Posterior vena cava (tissue), 2 donors: ENCODE measurements at regions of chr17 and their contacts with region 1.

Region 1: DNA sequence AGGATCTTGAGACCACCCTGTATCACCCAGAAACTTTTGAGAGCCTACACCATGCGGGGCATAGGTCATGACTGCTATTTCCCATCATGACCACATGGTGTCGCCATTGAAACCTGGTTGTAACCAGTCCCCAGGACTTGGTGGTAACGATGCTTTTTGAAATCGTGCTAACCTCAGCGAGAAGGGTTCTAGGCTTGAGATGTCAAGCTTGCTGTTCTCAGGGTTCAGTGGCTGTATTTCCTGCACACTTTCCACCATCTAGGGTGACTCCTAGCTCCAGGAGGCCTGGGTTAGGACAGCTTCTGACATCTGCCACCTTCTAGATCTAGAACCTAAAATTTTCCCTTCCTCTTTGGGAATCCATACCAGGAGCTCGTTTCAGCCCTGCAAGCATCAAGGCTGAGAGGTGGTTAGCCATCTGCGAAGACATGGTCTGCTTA is 13.0 kb upstream of the SPNS3 start:
- DNase-seq: no peak

Region 2: DNA sequence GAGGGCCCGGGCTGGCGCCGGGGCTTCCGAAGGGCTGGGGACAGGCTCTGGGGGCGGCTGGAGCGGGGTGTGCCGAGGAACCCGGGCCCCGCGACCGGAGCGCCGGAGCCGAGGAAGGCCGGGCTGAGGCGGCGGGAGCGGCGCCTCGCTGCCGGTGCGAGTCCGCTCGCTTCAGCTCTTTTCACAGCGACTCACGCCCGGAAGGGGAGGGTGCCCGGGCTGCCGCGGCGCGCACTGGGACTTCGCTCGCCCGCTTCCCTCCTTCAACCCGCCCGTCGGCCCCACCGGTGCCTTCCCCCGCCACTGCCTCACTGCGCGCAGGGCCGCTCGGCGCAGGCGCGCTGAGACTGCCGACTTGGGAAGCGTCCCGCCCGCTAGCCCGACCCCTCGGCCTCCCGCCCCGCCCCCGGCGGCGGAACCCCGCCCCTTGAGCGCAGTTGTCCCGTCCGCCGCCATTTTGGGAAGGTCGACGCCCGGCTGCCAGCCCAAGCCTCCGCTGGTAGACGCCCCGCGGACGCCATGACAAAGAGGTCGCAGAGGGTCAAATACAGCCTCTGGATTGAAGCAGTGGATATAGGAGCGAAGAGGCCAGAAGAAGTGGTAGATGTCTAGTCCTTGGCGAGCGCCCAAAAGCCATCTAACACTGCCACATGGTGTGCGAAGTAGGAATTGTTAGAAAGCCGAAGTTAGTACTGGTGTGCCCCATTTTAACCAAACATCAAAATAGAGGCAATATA is 54.2 kb before region 1 on chr17 and contains the start of gene UBE2G1:
- intact Hi-C with region 1: no loop called
- DNase-seq: peak; percentile 99
- total RNA-seq, gene UBE2G1: 53.4 to 57.0 TPM

Region 3: DNA sequence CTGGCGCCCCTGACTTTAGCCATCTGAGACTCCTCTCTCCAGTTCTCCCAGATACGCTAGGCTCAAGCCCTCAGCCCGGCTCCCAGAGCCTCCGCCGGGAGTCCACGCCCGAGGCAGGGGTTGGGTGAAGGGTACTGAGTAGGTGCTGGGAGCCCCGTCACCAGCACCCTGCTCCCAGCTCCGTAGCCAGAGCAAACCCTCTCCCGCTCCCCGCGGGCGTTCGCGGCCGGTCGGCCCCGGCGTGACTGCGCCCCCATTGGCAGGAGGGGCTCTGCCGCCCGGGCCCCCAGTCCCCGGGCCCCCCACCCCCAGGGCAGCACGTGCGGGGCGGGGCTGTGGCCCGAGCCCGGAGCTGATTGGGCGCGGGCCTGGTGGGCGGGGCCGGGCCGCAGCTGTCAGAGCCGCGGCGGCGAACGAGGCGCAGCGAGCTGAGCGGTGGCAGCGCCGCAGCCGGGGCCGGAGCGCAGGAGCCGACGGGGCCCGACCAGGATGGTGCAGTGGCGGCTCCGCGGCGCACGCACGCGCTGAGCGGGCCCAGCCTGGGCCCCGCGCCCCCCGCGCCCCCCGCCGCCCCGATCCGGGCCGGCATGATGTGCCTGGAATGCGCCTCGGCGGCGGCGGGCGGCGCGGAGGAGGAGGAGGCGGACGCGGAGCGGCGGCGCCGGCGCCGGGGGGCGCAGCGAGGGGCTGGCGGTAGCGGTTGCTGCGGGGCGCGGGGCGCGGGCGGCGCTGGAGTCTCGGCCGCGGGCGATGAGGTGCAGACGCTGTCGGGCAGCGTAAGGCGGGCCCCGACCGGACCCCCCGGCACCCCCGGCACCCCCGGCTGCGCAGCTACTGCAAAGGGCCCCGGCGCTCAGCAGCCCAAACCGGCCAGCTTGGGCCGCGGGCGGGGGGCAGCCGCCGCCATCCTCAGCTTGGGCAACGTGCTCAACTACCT is 78.0 kb after region 1 on chr17 and contains the start of gene SPNS2:
- intact Hi-C with region 1: loop called in 1 of 2 experiments (anchors 10 kb)
- DNase-seq: peak; percentile 89
- total RNA-seq, gene SPNS2: 16.2 to 20.9 TPM

Region 4: DNA sequence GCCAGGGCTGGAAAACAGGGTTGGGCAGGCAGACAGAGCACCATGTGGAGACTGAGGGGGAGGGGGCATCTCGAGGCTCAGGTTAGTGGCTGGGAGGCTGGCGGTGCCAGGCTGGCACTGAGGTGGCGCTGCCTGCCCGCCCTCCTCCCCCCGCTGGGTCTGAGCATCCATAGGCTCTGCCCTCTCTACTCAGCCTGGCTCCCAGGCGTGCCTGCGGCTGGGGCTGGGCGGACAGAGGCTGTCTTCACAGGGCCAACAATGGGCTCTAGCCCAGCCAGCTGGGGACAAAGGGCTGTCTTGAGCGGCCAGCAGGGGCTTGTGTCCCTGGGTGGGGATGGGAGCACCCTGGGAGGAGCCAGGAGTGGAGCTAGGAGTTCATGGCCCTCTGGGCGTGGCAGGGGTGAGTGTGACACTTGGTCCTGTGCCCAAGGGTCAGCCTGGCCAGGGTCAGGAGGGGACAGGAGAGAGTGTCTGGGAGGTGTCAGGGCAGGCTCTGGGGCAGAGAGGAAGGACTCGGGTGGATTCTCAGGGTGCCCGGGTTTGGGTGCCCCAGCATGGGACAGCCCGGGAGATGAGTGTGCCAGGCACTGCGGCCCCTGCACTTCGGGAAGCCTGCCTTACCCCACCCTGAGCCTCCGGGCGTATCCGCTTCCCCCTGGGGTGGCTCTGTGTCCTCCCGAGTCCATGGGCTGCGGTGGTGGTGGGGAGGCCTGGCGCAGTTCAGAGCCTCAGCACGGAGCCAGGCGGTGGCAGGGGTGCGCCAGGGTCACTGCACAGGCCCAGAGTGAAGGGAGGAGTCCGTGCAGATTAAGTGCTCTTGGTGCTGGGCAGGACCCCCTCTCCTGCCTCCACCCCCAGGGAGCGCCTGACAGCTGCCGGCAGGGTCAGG is 113.6 kb after region 1 on chr17:
- intact Hi-C with region 1: loop called in 1 of 2 experiments (anchors 10 kb)
- DNase-seq: no peak

Region 5: DNA sequence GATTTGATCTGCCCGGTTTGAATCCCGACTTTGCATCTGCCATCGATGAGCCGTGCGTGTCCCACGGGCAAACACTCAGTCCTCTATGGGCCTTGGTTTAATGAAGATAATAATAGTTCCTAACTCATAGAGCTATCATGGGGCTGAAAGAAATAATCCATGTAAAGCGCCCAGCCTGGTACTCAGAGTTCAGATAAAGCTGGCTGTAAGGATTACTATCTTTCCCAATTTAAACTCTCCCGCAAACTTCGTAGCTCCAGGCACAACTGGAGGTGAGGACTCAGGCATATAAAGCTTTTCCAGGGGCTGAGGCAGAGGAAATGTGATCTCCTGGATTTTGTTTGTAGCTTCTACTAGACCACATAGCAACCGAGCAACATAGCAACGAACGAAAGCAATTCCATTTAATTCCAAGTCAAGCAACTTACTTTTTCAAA is 204.5 kb after region 1 on chr17:
- intact Hi-C with region 1: loop called (anchors 2 to 5 kb)
- DNase-seq: no peak

Region 6: DNA sequence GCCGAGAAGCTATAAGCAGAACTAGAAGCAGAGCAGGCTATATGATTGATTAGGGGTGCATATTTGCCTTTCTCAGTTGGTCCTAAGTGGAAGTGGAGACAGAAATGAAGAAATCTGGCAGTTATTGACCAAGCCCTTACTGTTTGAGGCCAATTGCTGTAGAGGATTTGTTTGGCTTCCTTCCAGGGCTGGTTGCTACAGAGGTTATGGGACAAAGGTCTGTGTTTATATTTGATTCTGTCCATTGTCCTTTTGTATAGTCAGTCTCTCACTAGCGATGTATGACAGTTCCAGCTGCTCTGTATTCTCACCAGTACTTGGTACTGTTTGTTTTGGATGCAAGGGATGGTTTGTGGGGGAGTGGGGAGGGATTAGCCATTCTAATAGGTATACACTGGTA is 228.0 kb after region 1 on chr17:
- intact Hi-C with region 1: no loop called
- DNase-seq: no peak